ENCODE measurements at regions of chr17 and their contacts with region 1.

Region 1: GRCh38 chr17:69523244-69523861 is 108.9 kb downstream of the MAP2K6 start:
- DNase-seq: peak; percentile 22 to 32
- H3K4me3 ChIP-seq: no peak overlapping the region
- H3K4me1 ChIP-seq: no peaks in the 10 kb centered on the region
- H3K27me3 ChIP-seq: no peaks in the 10 kb centered on the region

Region 2: DNA sequence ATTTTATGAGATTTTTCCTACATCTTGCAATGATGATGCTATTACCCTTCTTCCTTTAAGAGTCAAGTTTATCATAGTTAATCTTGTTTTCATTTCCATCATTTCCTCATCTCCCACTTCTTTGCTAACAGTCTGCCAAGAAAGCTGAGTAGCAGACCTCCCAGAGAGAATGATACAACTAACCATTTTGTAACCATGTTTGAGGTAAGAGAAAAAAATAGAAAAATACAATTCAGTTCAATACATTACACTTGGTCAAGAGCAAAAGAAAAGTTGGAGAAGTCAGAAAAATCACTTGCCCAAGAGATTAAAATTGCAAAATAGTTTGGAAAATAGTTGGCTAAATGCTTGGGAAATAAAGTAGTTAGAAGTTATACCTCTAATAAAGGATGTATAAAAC is 722.6 kb before region 1 on chr17:
- in situ Hi-C with region 1: no loop called
- DNase-seq: no peak
- H3K4me3 ChIP-seq: no peak overlapping the region
- H3K4me1 ChIP-seq: no peaks in the 10 kb centered on the region
- H3K27me3 ChIP-seq: peaks cover 4% of the 10 kb centered on the region; the same call in 1 of the 2 replicates

Region 3: GRCh38 chr17:69327060-69327831 is 196.1 kb before region 1 on chr17 and contains the start of gene ABCA5:
- in situ Hi-C with region 1: loop called (anchors 25 kb)
- DNase-seq: peak; percentile 76 to 82
- H3K4me3 ChIP-seq: peak within 1 kb of the TSS; percentile 60
- H3K4me1 ChIP-seq: peaks cover 12% of the 10 kb centered on the region
- H3K27me3 ChIP-seq: peaks cover 4% of the 10 kb centered on the region; the same call in 1 of the 2 replicates

Measured in HAP-1 (cell line).